Activated CD4-positive, alpha-beta memory T cell treated with anti-CD3 and anti-CD28 coated beads for 36 hours (primary cell): ENCODE measurements at regions of chr16 and their contacts with region 1.

Region 1: GRCh38 chr16:76583466-76583865 is 306.3 kb downstream of the CNTNAP4 start:
- DNase-seq: no peak
- H3K4me3 Mint-ChIP-seq: no peak overlapping the region
- H3K27ac Mint-ChIP-seq: no peak overlapping the region
- H3K4me1 Mint-ChIP-seq: no peaks in the 10 kb centered on the region
- H3K27me3 Mint-ChIP-seq: no peaks in the 10 kb centered on the region

Region 2: GRCh38 chr16:76309639-76310335 is 273.7 kb before region 1 on chr16:
- CTCF ChIA-PET with region 1: no interaction called
- POLR2A ChIA-PET with region 1: no interaction called
- intact Hi-C with region 1: no loop called
- DNase-seq: no peak
- H3K4me3 Mint-ChIP-seq: no peak overlapping the region
- H3K27ac Mint-ChIP-seq: no peak overlapping the region
- H3K4me1 Mint-ChIP-seq: no peaks in the 10 kb centered on the region
- H3K27me3 Mint-ChIP-seq: no peaks in the 10 kb centered on the region

Region 3: GRCh38 chr16:76565542-76565941 is 17.9 kb before region 1 on chr16:
- CTCF ChIA-PET with region 1: no interaction called
- POLR2A ChIA-PET with region 1: no interaction called
- intact Hi-C with region 1: no loop called
- DNase-seq: no peak
- H3K4me3 Mint-ChIP-seq: no peak overlapping the region
- H3K27ac Mint-ChIP-seq: no peak overlapping the region
- H3K4me1 Mint-ChIP-seq: no peaks in the 10 kb centered on the region
- H3K27me3 Mint-ChIP-seq: no peaks in the 10 kb centered on the region

Region 4: DNA sequence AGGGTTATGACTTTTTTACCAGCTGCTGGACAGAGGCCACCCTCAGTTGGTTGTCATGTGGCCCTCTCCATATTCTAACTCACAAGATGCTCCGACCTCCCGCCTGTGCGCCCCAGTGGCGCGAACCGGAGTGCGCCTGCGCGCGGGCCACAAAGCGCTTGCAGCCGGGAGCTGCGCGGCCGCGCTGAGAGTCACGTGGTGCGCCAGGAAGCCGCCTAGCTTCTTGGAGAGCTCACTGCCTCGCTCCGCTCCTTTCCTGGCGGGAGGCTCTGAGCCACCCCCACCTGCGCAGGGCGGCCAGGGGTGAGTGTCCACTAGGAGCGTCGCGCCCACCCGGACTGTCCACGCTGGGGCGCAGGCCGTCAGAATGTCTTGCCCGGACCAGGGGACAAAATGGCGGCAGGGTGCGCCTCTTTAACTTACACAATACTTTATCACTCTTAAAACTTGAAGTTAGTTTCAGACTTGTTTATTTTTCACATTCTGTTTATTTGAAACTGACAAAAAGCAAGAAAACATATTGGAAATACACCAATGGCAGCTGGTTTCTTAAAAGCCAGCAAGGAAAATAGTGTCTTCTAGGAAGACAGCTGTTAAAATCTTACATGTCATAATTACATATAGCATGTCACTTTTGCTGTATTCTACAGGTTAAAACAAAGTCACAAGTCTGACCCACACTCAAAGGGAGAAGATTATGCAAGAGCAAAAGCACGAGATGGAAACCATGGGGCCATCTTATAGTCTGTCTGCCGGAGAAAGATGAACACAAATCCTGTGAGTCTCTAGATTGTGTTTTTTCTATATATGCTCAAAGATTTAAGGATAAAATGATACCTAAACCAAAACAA is 51.6 kb after region 1 on chr16:
- CTCF ChIA-PET with region 1: interaction called, 11 read pairs
- POLR2A ChIA-PET with region 1: no interaction called
- intact Hi-C with region 1: no loop called
- DNase-seq: no peak
- H3K4me3 Mint-ChIP-seq: no peak overlapping the region
- H3K27ac Mint-ChIP-seq: no peak overlapping the region
- H3K4me1 Mint-ChIP-seq: no peaks in the 10 kb centered on the region
- H3K27me3 Mint-ChIP-seq: no peaks in the 10 kb centered on the region